IMR-90 (cell line): ENCODE measurements at regions of chr3 and their contacts with region 1.

Region 1: DNA sequence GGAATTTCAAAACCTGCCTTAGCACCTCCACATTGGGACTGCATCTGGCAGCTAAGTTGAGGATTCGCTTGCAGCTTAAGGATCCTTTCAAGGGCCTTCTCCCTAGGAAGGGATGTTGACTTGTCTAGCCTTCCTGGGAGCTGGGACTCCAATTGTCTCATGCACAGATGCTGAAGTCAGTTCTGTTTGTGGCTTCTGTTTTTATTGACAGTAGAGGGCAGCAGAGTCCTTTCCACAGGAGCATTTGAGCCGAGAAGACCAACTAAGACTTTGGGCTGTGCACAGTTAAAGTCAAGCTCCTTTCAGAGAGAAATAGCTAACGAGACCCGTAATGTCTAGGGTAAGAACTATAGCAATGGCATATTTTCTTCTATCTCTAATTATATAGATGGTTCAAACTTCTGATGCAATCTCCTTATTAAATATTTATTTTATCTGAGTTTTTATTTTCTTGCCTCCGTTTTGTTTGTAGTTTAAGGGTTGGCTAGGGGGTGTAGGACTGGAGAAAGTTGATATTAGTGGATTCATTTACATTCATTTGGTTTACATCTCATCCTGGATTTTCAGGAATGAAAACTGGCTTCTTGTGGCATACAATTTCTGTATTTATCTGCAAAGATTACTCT is 59.7 kb upstream of the KBTBD8 start:
- DNase-seq: peak; percentile 67
- ATAC-seq: peak; percentile 100
- H3K4me3 ChIP-seq: no peak overlapping the region
- H3K27ac ChIP-seq: no peak overlapping the region
- H3K4me1 ChIP-seq: no peaks in the 10 kb centered on the region
- H3K27me3 ChIP-seq: peaks cover 2% of the 10 kb centered on the region
- CTCF ChIP-seq: peak; percentile 74
- POLR2A ChIP-seq: no peak
- RAD21 ChIP-seq: peak; percentile 77

Region 2: DNA sequence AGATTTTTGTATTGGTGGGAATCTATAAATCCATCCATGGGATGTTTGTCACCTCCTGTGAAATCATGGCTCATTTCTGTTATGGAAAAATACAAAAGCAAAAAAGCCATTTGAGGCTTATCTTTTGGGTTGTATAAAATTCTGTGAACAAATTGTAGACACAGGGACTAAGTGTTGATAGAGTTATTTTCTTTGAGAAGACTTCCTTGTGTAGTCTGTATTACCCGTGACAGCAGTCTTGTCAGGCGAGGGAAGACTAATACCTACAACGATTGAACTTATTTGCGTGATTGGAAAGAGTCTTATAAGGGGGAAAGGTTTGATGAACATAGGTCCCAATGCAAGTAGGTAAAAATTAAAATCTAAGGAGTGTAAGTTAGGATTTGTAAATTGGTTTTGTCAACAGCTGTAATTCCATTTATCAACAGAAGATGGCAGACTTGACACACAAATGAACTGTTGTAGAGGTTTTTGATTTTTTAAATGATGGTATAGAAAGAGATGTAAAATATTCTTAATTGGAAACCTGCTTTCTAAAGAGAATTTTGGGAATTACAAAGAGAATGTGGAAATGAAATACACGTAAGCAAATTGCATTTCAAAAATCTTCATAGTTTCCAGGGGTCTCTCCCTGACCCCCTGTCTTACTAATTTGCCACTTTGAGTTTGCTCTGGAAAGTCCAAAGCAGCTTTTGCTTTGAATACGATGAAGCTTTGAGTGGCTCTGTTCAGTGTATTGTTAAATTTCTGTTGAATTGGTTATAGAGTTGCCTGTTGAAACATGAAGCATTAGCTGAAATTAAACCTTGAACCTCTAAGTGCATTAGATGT is 684.4 kb before region 1 on chr3:
- CTCF ChIA-PET with region 1: interaction called, 3 read pairs
- POLR2A ChIA-PET with region 1: no interaction called
- dilution Hi-C with region 1: no loop called
- in situ Hi-C with region 1: no loop called
- intact Hi-C with region 1: loop called (anchors 5 kb)
- DNase-seq: peak; percentile 67
- ATAC-seq: peak; percentile 70
- H3K4me3 ChIP-seq: no peak overlapping the region
- H3K27ac ChIP-seq: no peak overlapping the region
- H3K4me1 ChIP-seq: peaks cover 12% of the 10 kb centered on the region
- H3K27me3 ChIP-seq: no peaks in the 10 kb centered on the region
- CTCF ChIP-seq: peak; percentile 75
- POLR2A ChIP-seq: no peak
- RAD21 ChIP-seq: peak; percentile 77

Region 3: DNA sequence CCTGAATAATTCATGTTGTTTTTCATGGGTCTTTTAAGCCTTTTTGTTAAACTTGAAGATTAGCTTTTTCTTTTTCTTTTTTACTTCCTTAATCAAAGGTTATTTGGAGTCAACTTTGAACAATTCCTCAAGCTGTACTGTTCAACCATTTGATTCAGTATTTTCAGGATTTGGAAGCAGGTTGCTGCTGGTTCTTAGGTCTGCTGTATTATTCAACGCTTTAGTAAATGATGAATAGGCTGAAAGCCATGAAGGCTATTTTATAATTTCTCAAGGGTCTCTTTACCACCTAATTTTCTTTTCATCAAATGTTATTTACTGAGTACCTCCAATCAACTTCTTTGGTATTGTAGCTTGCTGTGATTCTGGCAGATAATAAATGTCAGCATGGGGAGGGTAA is 13.9 kb after region 1 on chr3:
- CTCF ChIA-PET with region 1: interaction called, 11 read pairs
- POLR2A ChIA-PET with region 1: no interaction called
- dilution Hi-C with region 1: no loop called
- in situ Hi-C with region 1: no loop called
- intact Hi-C with region 1: no loop called
- DNase-seq: no peak
- ATAC-seq: no peak
- H3K4me3 ChIP-seq: no peak overlapping the region
- H3K27ac ChIP-seq: no peak overlapping the region
- H3K4me1 ChIP-seq: no peaks in the 10 kb centered on the region
- H3K27me3 ChIP-seq: peaks cover 5% of the 10 kb centered on the region
- CTCF ChIP-seq: no peak
- POLR2A ChIP-seq: no peak
- RAD21 ChIP-seq: no peak

Region 4: DNA sequence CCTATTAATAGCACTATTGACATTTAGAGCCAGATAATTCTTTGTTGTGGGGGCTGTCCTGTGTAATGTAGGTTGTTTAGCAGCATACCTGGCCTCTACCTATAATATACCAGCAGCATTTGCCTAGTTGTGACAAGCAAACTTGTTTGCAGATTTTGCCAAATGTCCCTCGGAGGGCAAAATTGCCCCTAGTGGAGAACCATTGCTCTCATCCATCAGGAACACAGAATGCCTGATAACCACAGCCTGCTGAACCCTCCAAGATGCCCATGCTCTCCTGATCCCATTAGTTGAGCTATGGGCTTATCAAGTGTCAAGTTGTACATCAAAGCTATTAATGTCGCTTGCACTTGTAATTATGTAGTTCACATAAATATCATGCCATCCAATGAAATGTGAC is 44.6 kb after region 1 on chr3:
- CTCF ChIA-PET with region 1: interaction called, 12 read pairs
- POLR2A ChIA-PET with region 1: no interaction called
- dilution Hi-C with region 1: no loop called
- in situ Hi-C with region 1: no loop called
- intact Hi-C with region 1: no loop called
- DNase-seq: no peak
- ATAC-seq: no peak
- H3K4me3 ChIP-seq: no peak overlapping the region
- H3K27ac ChIP-seq: no peak overlapping the region
- H3K4me1 ChIP-seq: no peaks in the 10 kb centered on the region
- H3K27me3 ChIP-seq: peaks cover 16% of the 10 kb centered on the region
- CTCF ChIP-seq: no peak
- POLR2A ChIP-seq: no peak
- RAD21 ChIP-seq: no peak

Region 5: GRCh38 chr3:67245545-67245944 is 307.1 kb after region 1 on chr3:
- CTCF ChIA-PET with region 1: no interaction called
- POLR2A ChIA-PET with region 1: no interaction called
- dilution Hi-C with region 1: no loop called
- in situ Hi-C with region 1: no loop called
- intact Hi-C with region 1: no loop called
- DNase-seq: no peak
- ATAC-seq: no peak
- H3K4me3 ChIP-seq: no peak overlapping the region
- H3K27ac ChIP-seq: no peak overlapping the region
- H3K4me1 ChIP-seq: no peaks in the 10 kb centered on the region
- H3K27me3 ChIP-seq: no peaks in the 10 kb centered on the region
- CTCF ChIP-seq: no peak
- POLR2A ChIP-seq: no peak
- RAD21 ChIP-seq: no peak

Region 6: GRCh38 chr3:68876112-68876713 is 1937.8 kb after region 1 on chr3:
- CTCF ChIA-PET with region 1: interaction called, 7 read pairs
- POLR2A ChIA-PET with region 1: no interaction called
- dilution Hi-C with region 1: no loop called
- in situ Hi-C with region 1: loop called (anchors 25 kb)
- intact Hi-C with region 1: loop called (anchors 1 kb)
- DNase-seq: peak; percentile 74
- ATAC-seq: peak; percentile 96
- H3K4me3 ChIP-seq: no peak overlapping the region
- H3K27ac ChIP-seq: no peak overlapping the region
- H3K4me1 ChIP-seq: no peaks in the 10 kb centered on the region
- H3K27me3 ChIP-seq: peaks cover 3% of the 10 kb centered on the region; the same call in 1 of the 2 replicates
- CTCF ChIP-seq: peak; percentile 92
- POLR2A ChIP-seq: no peak
- RAD21 ChIP-seq: peak; percentile 86